PC-3 (cell line): ENCODE measurements at regions of chr12 and their contacts with region 1.

Region 1: GRCh38 chr12:66708704-66709456 is 30.0 kb upstream of the GRIP1 start:
- DNase-seq: peak; percentile 72
- ATAC-seq: no peak
- H3K4me3 ChIP-seq: no peak overlapping the region
- H3K27ac ChIP-seq: no peak overlapping the region
- H3K4me1 ChIP-seq: no peaks in the 10 kb centered on the region
- H3K27me3 ChIP-seq: peaks cover 12% of the 10 kb centered on the region; the same call in 1 of the 2 replicates
- CTCF ChIP-seq: peak; percentile 64

Region 2: GRCh38 chr12:66269757-66270383 is 439.0 kb before region 1 on chr12:
- CTCF ChIA-PET with region 1: no interaction called
- POLR2A ChIA-PET with region 1: no interaction called
- intact Hi-C with region 1: loop called (anchors 5 kb)
- DNase-seq: peak; percentile 68
- ATAC-seq: peak; percentile 72; the same call in 1 of the 2 replicates
- H3K4me3 ChIP-seq: no peak overlapping the region
- H3K27ac ChIP-seq: no peak overlapping the region
- H3K4me1 ChIP-seq: no peaks in the 10 kb centered on the region
- H3K27me3 ChIP-seq: 0 out of 2 replicates have a peak, but pooled peaks cover 3% of the 10 kb centered on the region
- CTCF ChIP-seq: peak; percentile 83

Region 3: DNA sequence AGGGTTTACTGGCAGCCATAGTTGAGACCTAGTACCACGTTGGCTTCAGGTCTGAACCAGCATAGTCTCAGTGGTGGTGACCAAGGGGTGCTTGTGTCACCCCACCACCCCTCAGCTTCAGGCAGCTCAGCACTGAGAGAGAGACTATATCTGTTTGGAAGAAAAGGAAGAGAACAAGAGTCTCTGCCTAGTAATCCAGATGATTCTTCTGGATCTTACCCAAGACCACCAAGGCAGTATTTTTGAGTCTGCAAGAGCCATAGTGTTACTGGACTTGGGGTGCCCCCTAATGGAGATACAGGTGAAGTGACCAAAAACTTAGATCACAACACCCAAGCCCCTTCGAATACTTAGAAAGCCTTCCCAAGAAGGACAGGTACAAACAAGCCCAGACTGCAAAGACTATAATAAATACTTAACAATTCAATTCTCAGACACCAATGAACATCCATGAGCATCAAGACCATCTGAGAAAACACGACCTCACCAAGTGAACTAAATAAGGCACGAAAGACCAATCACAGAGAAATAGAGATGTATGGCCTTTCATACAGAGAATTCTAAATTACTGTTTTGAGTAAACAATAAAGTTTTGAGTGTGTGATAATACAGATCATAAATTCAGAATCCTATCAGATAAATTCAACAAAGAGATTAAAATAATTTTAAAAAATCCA is 299.5 kb before region 1 on chr12:
- CTCF ChIA-PET with region 1: no interaction called
- POLR2A ChIA-PET with region 1: no interaction called
- intact Hi-C with region 1: no loop called
- DNase-seq: peak; percentile 59
- ATAC-seq: peak; percentile 51; the same call in 1 of the 2 replicates
- H3K4me3 ChIP-seq: no peak overlapping the region
- H3K27ac ChIP-seq: no peak overlapping the region
- H3K4me1 ChIP-seq: peaks cover 10% of the 10 kb centered on the region
- H3K27me3 ChIP-seq: no peaks in the 10 kb centered on the region
- CTCF ChIP-seq: peak; percentile 81